Esophagus muscularis mucosa (tissue), 4 donors: ENCODE measurements at regions of chr2 and their contacts with region 1.

Region 1: GRCh38 chr2:71609958-71610357 is 156.6 kb downstream of the DYSF start:
- DNase-seq: no peak
- H3K4me3 ChIP-seq: no peak overlapping the region
- H3K27ac ChIP-seq: no peak overlapping the region
- H3K4me1 ChIP-seq: peaks cover 17 to 24% (median 21%) of the 10 kb centered on the region in 4 donors
- H3K27me3 ChIP-seq: no peaks in the 10 kb centered on the region
- CTCF ChIP-seq: peak in 2 of 3 experiments; percentile 31 to 33
- EP300 ChIP-seq: no peak
- POLR2A ChIP-seq: no peak

Region 2: DNA sequence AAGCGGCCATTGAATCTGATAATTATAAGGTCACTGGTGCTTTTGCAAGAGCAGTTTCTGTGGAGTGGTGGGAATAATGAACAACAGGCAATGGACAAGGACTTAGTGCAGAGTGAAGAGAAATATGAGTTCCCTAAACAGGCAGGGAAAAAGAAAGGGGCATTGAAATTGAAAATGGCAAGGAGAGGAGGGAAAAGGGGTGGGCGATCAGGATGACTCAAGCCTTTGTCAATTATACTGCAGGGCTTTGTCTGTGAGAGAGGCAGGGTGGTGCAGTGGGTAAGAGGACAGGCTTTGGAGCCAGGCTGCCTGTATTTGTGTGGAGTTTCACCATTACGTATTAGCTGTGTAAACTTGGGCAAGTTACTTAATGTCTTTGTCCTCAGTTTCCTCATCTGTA is 353.5 kb before region 1 on chr2:
- intact Hi-C with region 1: no loop called
- DNase-seq: no peak
- H3K4me3 ChIP-seq: no peak overlapping the region
- H3K27ac ChIP-seq: no peak overlapping the region
- H3K4me1 ChIP-seq: no peaks in the 10 kb centered on the region
- H3K27me3 ChIP-seq: peaks cover 0 to 4% (median 0%) of the 10 kb centered on the region in 4 donors
- CTCF ChIP-seq: no peak
- EP300 ChIP-seq: no peak
- POLR2A ChIP-seq: no peak

Region 3: DNA sequence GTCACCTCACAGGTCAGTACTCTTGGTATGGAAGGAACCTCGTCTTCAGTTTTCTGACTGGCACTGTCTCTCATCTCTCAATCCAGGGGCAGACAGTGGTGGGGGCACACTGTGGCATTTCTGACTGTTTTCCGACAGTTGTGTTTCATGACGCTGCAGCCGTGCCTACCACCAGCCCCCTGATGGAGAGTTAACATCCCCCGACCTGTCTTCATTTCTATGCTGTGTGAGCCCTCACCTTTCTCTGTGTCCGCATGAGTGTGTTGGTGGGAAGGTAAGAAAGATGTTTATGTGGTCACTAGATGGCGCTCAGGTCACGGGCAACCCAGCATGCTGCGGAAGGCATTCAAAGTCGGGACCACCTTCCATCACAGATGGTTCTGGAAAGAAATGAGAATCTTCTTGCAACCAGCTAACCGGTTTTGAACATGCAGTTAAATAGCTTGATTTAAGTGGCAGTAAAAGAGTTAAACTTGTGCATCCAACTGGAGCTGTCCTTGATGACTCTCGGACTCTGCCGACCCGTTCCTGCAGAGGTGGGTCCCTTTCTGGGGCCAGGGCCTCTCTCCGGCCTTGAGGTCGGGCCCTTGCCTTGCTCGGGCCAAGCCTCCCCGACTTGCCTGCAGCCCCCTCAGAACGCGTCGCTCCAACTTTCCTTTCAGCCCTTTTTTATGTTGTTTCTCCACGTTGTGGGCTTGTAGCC is 64.2 kb before region 1 on chr2:
- intact Hi-C with region 1: loop called (anchors 5 kb)
- DNase-seq: no peak
- H3K4me3 ChIP-seq: peak overlapping the region in 2 of 4 donors; percentile 23 to 32
- H3K27ac ChIP-seq: peak overlapping the region in 3 of 4 donors; percentile 26 to 55 (median 50)
- H3K4me1 ChIP-seq: peaks cover 3 to 13% (median 10%) of the 10 kb centered on the region in 4 donors
- H3K27me3 ChIP-seq: no peaks in the 10 kb centered on the region
- CTCF ChIP-seq: peak; percentile 55 to 67 (median 57)
- EP300 ChIP-seq: no peak
- POLR2A ChIP-seq: no peak

Region 4: GRCh38 chr2:71974846-71975245 is 364.9 kb after region 1 on chr2:
- intact Hi-C with region 1: no loop called
- DNase-seq: no peak
- H3K4me3 ChIP-seq: no peak overlapping the region
- H3K27ac ChIP-seq: no peak overlapping the region
- H3K4me1 ChIP-seq: no peaks in the 10 kb centered on the region
- H3K27me3 ChIP-seq: peaks cover 0 to 13% (median 0%) of the 10 kb centered on the region in 4 donors
- CTCF ChIP-seq: no peak
- EP300 ChIP-seq: no peak
- POLR2A ChIP-seq: no peak